Activated CD8-positive, alpha-beta T cell treated with anti-CD3 and anti-CD28 coated beads for 36 hours (primary cell): ENCODE measurements at regions of chr1 and their contacts with region 1.

Region 1: DNA sequence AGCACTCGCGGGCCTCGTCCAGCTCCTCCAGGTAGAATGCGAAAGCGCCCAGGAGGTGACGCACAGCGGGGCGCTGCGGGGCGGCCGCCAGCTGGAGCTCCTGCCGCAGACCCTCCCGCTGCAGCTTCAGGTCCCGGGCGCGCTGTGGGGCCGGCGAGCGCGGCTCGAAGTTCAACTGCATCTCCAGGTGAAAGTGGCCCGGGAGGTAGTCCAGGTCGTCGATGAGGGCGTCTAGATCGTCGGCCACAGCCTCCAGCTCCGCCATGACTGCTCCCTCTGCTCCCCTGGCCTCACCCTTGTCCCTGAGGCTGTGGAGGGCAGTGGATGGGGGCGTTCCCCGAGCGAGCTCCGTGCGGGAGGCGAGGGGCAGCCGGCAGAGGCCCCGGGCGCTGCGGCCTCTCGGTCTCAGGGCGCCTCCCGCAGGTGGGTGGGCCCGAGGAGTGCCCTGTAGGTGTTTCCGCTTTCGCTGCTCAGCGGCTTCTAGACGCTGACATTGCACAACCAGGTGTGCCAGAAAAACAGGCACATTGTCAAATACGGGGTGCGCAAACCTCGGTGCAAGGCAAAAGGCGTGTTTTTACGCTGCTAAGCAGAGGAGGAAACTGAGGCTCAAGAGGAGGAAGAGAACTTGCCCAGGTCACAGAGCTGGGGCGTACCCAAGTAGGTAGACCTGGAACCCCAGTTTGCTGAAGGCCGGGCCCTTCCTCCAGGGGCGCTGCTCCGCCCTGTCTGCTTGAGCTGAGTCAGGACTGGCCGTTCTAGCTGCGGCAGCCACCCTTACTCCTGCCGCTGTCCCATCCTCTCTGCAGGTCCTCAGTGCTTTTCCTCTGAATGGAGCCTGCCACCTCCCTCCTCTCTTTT is at the start of gene TTC22:
- DNase-seq: peak; percentile 87
- ATAC-seq: peak; percentile 71
- H3K4me3 Mint-ChIP-seq: peak within 1 kb of the TSS; percentile 81
- H3K27ac Mint-ChIP-seq: peak within 1 kb of the TSS; percentile 88
- H3K4me1 Mint-ChIP-seq: peaks cover 54% of the 10 kb centered on the region
- H3K27me3 Mint-ChIP-seq: no peaks in the 10 kb centered on the region
- CTCF ChIP-seq: peak; percentile 78
- total RNA-seq, gene TTC22: 3.3 to 3.5 TPM

Region 2: DNA sequence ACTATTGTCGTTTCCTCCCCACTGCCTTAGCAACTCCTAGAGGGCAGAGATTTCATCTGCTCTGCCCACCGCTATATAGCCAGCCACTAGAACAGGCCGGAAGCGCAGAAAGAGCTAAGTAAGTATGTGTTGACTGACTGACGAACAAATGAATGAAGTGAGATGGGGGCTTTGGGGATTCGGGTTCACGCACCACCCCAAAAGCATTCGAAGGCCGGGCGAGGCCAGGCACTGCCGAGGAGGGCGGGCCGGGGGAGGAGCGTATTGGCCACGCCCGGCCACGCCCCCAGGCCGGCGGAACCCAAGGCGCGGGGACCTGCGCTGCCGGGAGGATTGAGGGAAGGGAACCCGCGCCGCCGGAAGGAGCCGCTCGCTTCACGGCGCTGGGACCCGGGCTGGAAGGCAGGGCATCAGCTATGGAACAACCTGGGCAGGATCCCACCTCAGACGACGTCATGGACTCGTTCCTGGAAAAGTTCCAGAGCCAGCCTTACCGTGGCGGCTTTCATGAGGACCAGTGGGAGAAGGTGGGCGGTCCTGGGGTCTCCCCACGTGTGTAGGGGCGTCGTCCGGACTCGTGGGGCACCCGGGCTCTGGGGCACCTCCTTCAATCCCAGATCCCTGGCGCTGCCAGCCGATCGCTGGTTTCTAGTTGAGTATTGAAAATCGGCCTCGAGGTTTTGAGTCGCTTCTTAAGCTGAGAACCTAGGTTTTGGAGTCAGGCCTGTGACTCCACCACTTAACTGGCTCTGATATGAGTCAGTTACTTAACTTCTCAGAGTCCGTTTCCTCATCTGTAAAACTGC is 85.4 kb before region 1 on chr1 and contains the start of gene TTC4:
- CTCF ChIA-PET with region 1: interaction called, 10 read pairs
- POLR2A ChIA-PET with region 1: interaction called, 18 read pairs
- intact Hi-C with region 1: loop called (anchors 2 kb)
- DNase-seq: peak; percentile 84
- ATAC-seq: peak; percentile 97
- H3K4me3 Mint-ChIP-seq: peak within 1 kb of the TSS; percentile 93
- H3K27ac Mint-ChIP-seq: peak within 1 kb of the TSS; percentile 93
- H3K4me1 Mint-ChIP-seq: peaks cover 32% of the 10 kb centered on the region
- H3K27me3 Mint-ChIP-seq: no peaks in the 10 kb centered on the region
- CTCF ChIP-seq: no peak
- total RNA-seq, gene TTC4: 26.7 to 28.2 TPM

Region 3: GRCh38 chr1:54764133-54764921 is 36.8 kb before region 1 on chr1 and contains the start of gene PARS2:
- CTCF ChIA-PET with region 1: interaction called, 18 read pairs
- POLR2A ChIA-PET with region 1: interaction called, 3 read pairs
- intact Hi-C with region 1: no loop called
- DNase-seq: peak; percentile 98
- ATAC-seq: peak; percentile 96
- H3K4me3 Mint-ChIP-seq: peak within 1 kb of the TSS; percentile 91
- H3K27ac Mint-ChIP-seq: peak within 1 kb of the TSS; percentile 94
- H3K4me1 Mint-ChIP-seq: peaks cover 21% of the 10 kb centered on the region
- H3K27me3 Mint-ChIP-seq: no peaks in the 10 kb centered on the region
- CTCF ChIP-seq: no peak
- total RNA-seq, gene PARS2: 6.0 to 6.7 TPM